ENCODE measurements at regions of chr10 and their contacts with region 1.

Region 1: DNA sequence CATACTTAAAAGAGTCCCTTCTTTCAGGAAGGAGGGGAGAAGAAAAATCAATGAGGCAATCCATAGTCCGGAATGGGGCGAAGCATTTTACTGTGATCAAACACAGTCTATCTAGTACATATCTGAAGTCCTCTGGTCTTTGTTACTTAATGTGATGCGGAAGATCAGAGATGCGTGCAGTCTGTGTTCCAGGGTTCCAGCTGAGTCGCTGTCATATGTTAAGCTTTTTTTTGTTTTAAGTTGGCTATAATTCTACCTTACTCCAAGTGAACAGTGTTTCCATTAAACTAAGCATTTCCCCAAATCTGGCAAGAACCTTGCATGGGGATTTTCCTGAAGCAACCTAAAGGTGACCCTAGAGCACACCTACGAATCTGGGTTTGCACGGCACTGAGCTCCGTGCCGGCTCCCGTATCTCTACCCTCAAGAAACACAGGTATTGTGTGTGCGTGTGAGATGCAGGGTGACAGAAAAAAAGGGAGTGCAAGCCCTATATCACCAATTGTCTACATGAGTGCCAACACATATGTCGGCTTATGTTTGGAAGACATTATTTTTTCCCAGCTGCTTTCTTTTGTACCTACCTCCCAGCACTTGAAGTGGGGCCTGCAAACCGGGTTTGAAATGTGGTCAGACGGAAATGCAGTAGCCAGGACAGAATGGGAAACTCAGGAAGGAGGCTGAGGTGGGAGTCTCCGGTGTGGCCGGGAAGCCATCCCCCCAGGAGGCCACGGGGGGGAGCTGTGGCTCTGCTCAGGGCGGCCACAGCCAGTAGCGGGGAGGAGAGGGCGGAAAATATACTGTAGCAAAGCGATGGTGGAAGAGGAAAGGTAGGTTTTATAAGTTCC is 435.8 kb upstream of the MGMT start:
- DNase-seq: peak in 4 of 5 donors; percentile 23 to 47 (median 34)
- H3K4me3 ChIP-seq: no peak overlapping the region
- H3K4me3 Mint-ChIP-seq: peak overlapping the region in 4 of 8 donors; percentile 1 to 67 (median 32)
- H3K27ac ChIP-seq: no peak overlapping the region
- H3K27ac Mint-ChIP-seq: no peak overlapping the region
- H3K4me1 ChIP-seq: peaks cover 23% of the 10 kb centered on the region
- H3K4me1 Mint-ChIP-seq: peaks cover 11 to 34% (median 24%) of the 10 kb centered on the region in 4 donors
- H3K27me3 ChIP-seq: no peaks in the 10 kb centered on the region
- H3K27me3 Mint-ChIP-seq: peaks cover 2 to 3% of the 10 kb centered on the region in 2 donors

Region 2: GRCh38 chr10:129057856-129058663 is 26.8 kb after region 1 on chr10:
- CTCF ChIA-PET with region 1: no interaction called
- POLR2A ChIA-PET with region 1: interaction called, 27 read pairs
- intact Hi-C with region 1: loop called (anchors 1 kb)
- DNase-seq: peak; percentile 36 to 58 (median 51)
- H3K4me3 ChIP-seq: peak overlapping the region in 1 of 2 donors; percentile 8
- H3K4me3 Mint-ChIP-seq: peak overlapping the region in 5 of 8 donors; percentile 36 to 73 (median 72)
- H3K27ac ChIP-seq: no peak overlapping the region
- H3K27ac Mint-ChIP-seq: peak overlapping the region in 3 of 7 donors; percentile 21 to 44 (median 42)
- H3K4me1 ChIP-seq: peaks cover 34% of the 10 kb centered on the region
- H3K4me1 Mint-ChIP-seq: peaks cover 8 to 39% (median 25%) of the 10 kb centered on the region in 4 donors
- H3K27me3 ChIP-seq: no peaks in the 10 kb centered on the region
- H3K27me3 Mint-ChIP-seq: no peaks in the 10 kb centered on the region

Region 3: DNA sequence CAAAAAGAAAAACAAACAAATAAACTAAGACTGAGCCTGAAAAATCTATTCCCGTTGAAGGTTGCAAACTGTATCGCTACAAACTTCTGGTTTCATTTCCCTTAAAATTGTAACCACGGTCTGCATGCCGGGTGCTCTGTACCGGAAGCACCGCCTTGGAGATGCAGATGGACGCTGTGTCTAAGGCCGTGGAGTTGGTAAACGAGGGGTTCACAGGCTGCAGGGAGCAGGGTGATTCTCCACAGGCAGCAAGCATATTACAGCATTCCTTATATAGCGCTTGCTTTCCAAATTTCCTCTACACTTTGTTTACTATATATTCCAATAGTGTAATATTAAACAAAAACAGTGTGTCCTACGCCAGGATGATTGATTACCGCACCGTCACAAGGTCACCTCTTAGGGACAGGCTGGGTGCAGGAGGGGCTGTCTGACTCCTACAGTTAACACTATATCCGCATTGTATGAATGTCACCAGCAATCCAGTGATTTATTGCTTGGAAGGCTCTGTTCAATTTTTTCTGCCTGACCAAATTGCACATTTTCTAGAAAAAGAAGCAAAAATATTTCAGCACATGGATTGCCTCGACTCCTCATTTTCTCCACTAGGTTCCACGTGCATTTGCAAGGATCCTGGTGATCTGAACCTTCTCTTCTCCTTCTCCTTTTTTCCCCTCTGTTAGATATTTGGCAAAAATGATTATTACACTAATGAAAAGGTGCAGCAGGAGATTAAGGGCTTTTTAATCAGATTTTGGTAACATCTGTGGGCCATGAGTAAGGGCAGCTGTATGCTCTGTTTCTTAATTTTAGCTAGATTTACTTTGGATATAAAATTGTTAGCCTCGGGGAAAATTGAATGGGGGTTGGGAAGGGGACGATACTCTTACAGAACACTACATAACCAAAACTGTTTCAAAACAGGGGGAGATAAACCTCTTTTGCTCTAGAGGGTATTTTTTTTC is 110.0 kb after region 1 on chr10:
- CTCF ChIA-PET with region 1: no interaction called
- POLR2A ChIA-PET with region 1: no interaction called
- intact Hi-C with region 1: loop called (anchors 10 kb)
- DNase-seq: no peak
- H3K4me3 ChIP-seq: no peak overlapping the region
- H3K4me3 Mint-ChIP-seq: no peak overlapping the region
- H3K27ac ChIP-seq: no peak overlapping the region
- H3K27ac Mint-ChIP-seq: peak overlapping the region in 1 of 7 donors; percentile 60
- H3K4me1 ChIP-seq: no peaks in the 10 kb centered on the region
- H3K4me1 Mint-ChIP-seq: peaks cover 0 to 5% (median 0%) of the 10 kb centered on the region in 4 donors
- H3K27me3 ChIP-seq: no peaks in the 10 kb centered on the region
- H3K27me3 Mint-ChIP-seq: peaks cover 4 to 9% of the 10 kb centered on the region in 2 donors

Region 4: GRCh38 chr10:129345763-129346162 is 314.5 kb after region 1 on chr10:
- CTCF ChIA-PET with region 1: no interaction called
- POLR2A ChIA-PET with region 1: no interaction called
- intact Hi-C with region 1: no loop called
- DNase-seq: no peak
- H3K4me3 ChIP-seq: no peak overlapping the region
- H3K4me3 Mint-ChIP-seq: no peak overlapping the region
- H3K27ac ChIP-seq: no peak overlapping the region
- H3K27ac Mint-ChIP-seq: no peak overlapping the region
- H3K4me1 ChIP-seq: no peaks in the 10 kb centered on the region
- H3K4me1 Mint-ChIP-seq: no peaks in the 10 kb centered on the region
- H3K27me3 ChIP-seq: no peaks in the 10 kb centered on the region
- H3K27me3 Mint-ChIP-seq: peaks cover 5 to 7% of the 10 kb centered on the region in 2 donors

Region 5: DNA sequence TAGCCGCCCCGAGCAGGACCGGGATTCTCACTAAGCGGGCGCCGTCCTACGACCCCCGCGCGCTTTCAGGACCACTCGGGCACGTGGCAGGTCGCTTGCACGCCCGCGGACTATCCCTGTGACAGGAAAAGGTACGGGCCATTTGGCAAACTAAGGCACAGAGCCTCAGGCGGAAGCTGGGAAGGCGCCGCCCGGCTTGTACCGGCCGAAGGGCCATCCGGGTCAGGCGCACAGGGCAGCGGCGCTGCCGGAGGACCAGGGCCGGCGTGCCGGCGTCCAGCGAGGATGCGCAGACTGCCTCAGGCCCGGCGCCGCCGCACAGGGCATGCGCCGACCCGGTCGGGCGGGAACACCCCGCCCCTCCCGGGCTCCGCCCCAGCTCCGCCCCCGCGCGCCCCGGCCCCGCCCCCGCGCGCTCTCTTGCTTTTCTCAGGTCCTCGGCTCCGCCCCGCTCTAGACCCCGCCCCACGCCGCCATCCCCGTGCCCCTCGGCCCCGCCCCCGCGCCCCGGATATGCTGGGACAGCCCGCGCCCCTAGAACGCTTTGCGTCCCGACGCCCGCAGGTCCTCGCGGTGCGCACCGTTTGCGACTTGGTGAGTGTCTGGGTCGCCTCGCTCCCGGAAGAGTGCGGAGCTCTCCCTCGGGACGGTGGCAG is 435.6 kb after region 1 on chr10 and contains the start of gene MGMT:
- CTCF ChIA-PET with region 1: no interaction called
- POLR2A ChIA-PET with region 1: interaction called, 3 read pairs
- intact Hi-C with region 1: loop called (anchors 2 kb)
- DNase-seq: peak; percentile 94 to 98 (median 95)
- H3K4me3 ChIP-seq: peak within 1 kb of the TSS; percentile 20 to 80
- H3K4me3 Mint-ChIP-seq: peak within 1 kb of the TSS; percentile 82 to 90 (median 86)
- H3K27ac ChIP-seq: peak within 1 kb of the TSS; percentile 68
- H3K27ac Mint-ChIP-seq: peak within 1 kb of the TSS; percentile 78 to 88 (median 84)
- H3K4me1 ChIP-seq: peaks cover 17% of the 10 kb centered on the region
- H3K4me1 Mint-ChIP-seq: peaks cover 7 to 27% (median 14%) of the 10 kb centered on the region in 4 donors
- H3K27me3 ChIP-seq: no peaks in the 10 kb centered on the region
- H3K27me3 Mint-ChIP-seq: peaks cover 0 to 2% of the 10 kb centered on the region in 2 donors
- total RNA-seq, gene MGMT: 18.5 to 21.2 TPM

Region 6: DNA sequence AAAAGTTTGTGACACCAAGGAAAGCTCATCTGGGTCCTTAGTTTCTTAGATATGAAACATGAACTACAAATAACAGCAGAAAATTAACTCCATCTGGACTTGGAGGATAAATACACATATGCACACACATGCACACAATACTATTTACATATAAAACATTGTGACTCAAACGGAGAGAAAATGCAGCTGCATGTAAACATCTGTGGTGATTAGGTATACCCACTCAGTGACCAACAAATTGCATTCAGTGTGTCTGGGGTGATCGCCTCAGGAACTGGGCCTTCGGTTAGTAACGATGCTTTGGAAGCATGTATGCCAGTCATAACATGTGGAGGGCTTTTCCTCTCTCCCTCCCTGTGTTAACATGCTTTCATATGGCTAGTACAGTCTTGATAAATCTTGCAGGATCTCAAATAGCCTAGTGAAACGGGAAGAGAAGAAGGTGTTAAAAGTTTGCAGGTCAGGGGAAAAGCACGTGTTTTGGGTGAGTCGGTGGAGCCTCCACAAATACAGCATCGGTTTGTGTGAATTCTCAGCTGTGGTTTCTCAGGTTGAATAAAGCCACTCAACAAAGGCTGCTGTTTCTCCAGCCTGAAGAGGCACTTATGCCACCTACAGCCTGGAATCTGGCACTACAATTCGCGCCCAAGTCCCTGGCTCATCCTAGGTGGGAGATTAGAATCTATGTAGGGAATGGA is 1096.3 kb after region 1 on chr10:
- CTCF ChIA-PET with region 1: interaction called, 7 read pairs
- POLR2A ChIA-PET with region 1: no interaction called
- intact Hi-C with region 1: loop called (anchors 1 kb)
- DNase-seq: peak; percentile 38 to 55 (median 53)
- H3K4me3 ChIP-seq: no peak overlapping the region
- H3K4me3 Mint-ChIP-seq: no peak overlapping the region
- H3K27ac ChIP-seq: no peak overlapping the region
- H3K27ac Mint-ChIP-seq: no peak overlapping the region
- H3K4me1 ChIP-seq: peaks cover 5% of the 10 kb centered on the region
- H3K4me1 Mint-ChIP-seq: peaks cover 4 to 5% (median 5%) of the 10 kb centered on the region in 4 donors
- H3K27me3 ChIP-seq: peaks cover 12% of the 10 kb centered on the region
- H3K27me3 Mint-ChIP-seq: peaks cover 11 to 15% of the 10 kb centered on the region in 2 donors